ENCODE measurements at regions of chr17 and their contacts with region 1.

Region 1: GRCh38 chr17:28357061-28357900 is at the start of gene POLDIP2:
- DNase-seq: peak; percentile 95
- ATAC-seq: peak; percentile 99
- H3K4me3 Mint-ChIP-seq: peak within 1 kb of the TSS; percentile 91
- H3K27ac Mint-ChIP-seq: peak within 1 kb of the TSS; percentile 98
- H3K4me1 Mint-ChIP-seq: peaks cover 13% of the 10 kb centered on the region
- H3K27me3 Mint-ChIP-seq: no peaks in the 10 kb centered on the region
- CTCF ChIP-seq: no peak
- total RNA-seq, gene POLDIP2: 79.2 to 85.4 TPM (median 79.7 TPM) in 3 replicates

Region 2: DNA sequence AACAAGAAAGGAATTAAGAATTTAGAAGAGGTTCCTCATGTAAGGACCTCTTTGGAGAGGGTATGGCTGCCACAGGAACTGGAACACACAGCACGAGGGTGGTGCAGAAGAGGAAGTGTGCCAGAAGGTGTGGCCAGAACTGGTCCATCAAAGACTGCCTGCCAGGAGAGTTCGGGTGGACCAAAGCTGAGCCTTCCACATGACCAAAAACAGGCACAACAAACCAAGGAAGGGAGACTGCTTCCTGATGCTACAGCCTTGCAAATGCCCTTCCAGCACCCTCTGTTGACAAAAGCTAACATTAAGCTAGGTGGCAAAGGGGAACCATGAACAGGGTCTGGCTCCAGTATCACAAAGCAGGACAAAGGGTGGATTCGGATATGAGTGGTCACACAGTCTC is 164.0 kb before region 1 on chr17:
- CTCF ChIA-PET with region 1: no interaction called
- POLR2A ChIA-PET with region 1: no interaction called
- DNase-seq: no peak
- ATAC-seq: peak; percentile 66
- H3K4me3 Mint-ChIP-seq: no peak overlapping the region
- H3K27ac Mint-ChIP-seq: no peak overlapping the region; the same call in 1 of the 2 replicates
- H3K4me1 Mint-ChIP-seq: peaks cover 20% of the 10 kb centered on the region
- H3K27me3 Mint-ChIP-seq: no peaks in the 10 kb centered on the region
- CTCF ChIP-seq: no peak

Region 3: DNA sequence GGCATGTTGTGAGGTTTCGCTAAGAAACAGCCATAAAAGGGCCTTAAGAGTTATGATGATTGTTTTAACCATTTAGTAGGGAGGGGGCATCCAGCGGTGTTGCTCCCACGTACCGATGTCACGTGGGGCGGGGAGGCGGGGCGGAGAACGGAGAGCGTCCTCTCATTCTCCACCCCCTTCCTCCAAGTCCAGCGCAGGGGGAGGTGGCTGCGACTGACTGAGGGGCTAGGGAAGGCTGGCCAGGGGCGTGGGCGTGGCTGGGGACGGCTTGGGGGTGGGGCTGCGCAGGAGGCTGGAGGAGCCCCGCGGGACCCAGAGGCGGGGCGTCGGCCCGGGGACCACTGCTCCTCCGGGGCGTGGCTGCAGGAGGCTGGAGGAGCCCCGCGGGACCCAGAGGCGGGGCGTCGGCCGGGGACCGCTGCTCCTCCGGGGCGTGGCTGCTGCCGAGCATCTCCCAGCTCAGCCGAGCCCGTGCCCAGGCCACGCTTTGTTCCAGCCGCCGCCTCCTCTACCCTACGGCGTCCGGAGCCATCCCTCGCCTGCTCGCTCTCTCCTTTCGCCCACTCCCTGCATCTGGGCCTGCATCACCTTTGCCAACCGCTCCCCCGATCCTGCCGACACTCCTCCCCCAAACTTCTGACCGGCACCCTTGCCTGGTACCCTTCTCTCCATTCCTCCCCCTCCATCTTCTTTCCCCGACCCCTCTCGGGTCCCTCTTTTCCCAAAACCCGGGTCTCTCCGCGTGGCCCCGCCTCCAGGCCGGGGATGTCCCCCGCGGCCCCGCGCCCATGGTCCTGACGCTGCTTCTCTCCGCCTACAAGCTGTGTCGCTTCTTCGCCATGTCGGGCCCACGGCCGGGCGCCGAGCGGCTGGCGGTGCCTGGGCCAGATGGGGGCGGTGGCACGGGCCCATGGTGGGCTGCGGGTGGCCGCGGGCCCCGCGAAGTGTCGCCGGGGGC is 14.2 kb after region 1 on chr17 and contains the start of gene SARM1:
- CTCF ChIA-PET with region 1: interaction called, 16 read pairs
- POLR2A ChIA-PET with region 1: interaction called, 12 read pairs
- DNase-seq: peak; percentile 99
- ATAC-seq: peak; percentile 93
- H3K4me3 Mint-ChIP-seq: peak within 1 kb of the TSS; percentile 75
- H3K27ac Mint-ChIP-seq: peak within 1 kb of the TSS; percentile 92
- H3K4me1 Mint-ChIP-seq: peaks cover 21% of the 10 kb centered on the region
- H3K27me3 Mint-ChIP-seq: peaks cover 45% of the 10 kb centered on the region
- CTCF ChIP-seq: no peak
- total RNA-seq, gene SARM1: 3.8 to 4.7 TPM (median 4.7 TPM) in 3 replicates